IMR-90 (cell line): ENCODE measurements at regions of chr13 and their contacts with region 1.

Region 1: DNA sequence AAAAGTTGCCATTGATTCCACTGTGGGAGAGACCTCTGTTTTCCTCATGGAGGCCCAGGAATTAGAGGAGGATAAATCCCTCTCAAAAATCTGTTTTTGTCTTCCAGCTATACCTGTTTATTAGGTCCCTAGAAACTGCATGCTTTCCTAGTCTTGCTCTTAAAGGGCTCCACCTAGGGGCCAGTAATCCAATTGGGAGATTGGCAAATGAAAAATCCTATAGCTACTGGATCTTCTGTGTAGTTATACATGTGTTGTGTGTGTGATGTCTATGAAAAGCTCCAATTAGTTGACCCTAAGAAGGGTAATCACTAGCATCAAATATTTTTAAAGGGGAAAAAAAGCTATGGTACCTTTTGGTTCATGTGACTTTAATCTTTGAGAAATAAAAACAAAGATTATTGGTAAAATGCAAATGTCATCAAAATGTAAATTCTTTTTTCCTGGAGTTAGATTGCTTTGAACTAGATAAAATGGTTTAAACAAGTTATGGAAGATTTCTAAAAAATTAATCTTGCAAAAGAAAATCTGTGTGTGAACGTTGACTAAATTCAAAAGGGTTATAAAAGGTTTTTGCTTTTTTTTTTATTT is 63.4 kb upstream of the C1QTNF9B start:
- DNase-seq: peak; percentile 60
- ATAC-seq: peak; percentile 69
- H3K4me3 ChIP-seq: no peak overlapping the region
- H3K27ac ChIP-seq: no peak overlapping the region
- H3K4me1 ChIP-seq: peaks cover 2% of the 10 kb centered on the region; the same call in 1 of the 2 replicates
- H3K27me3 ChIP-seq: no peaks in the 10 kb centered on the region
- CTCF ChIP-seq: peak; percentile 72
- POLR2A ChIP-seq: no peak
- RAD21 ChIP-seq: peak; percentile 62

Region 2: GRCh38 chr13:23921451-23921888 is 39.2 kb before region 1 on chr13:
- CTCF ChIA-PET with region 1: interaction called, 7 read pairs
- POLR2A ChIA-PET with region 1: no interaction called
- dilution Hi-C with region 1: no loop called
- in situ Hi-C with region 1: no loop called
- intact Hi-C with region 1: loop called (anchors 2 kb)
- DNase-seq: peak; percentile 66
- ATAC-seq: peak; percentile 61
- H3K4me3 ChIP-seq: no peak overlapping the region
- H3K27ac ChIP-seq: no peak overlapping the region
- H3K4me1 ChIP-seq: peaks cover 2% of the 10 kb centered on the region; the same call in 1 of the 2 replicates
- H3K27me3 ChIP-seq: no peaks in the 10 kb centered on the region
- CTCF ChIP-seq: peak; percentile 83
- POLR2A ChIP-seq: no peak
- RAD21 ChIP-seq: peak; percentile 86

Region 3: DNA sequence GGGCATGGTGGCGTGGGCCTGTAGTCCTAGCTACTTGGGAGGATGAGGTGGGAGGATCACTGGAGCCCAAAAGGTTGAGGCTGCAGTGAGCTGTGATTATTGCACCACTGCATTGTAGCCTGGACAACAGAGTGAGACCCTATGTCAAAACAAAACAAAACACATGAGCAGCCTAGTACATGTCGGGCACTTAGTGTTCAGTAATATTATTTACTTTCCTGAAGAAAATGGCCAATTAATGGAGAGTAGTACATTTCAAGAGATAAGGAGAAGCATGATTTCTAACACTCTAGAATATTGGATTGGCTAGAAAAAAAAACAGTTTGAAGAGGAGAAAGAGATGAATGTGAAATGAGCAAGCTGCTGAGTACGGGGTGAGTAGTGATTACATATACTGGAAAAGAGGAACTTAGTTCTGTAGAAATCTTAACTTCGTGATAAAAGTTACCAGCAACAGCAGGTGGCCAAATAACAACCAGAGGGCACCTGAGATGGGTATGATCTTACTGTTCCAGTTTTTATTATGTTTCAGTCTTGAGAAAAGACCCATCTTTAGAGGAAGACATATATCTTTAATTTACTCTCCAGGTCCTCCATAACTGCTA is 236.0 kb after region 1 on chr13:
- CTCF ChIA-PET with region 1: no interaction called
- POLR2A ChIA-PET with region 1: no interaction called
- dilution Hi-C with region 1: no loop called
- in situ Hi-C with region 1: no loop called
- intact Hi-C with region 1: no loop called
- DNase-seq: no peak
- ATAC-seq: no peak
- H3K4me3 ChIP-seq: no peak overlapping the region
- H3K27ac ChIP-seq: no peak overlapping the region
- H3K4me1 ChIP-seq: no peaks in the 10 kb centered on the region; the same call in 1 of the 2 replicates
- H3K27me3 ChIP-seq: no peaks in the 10 kb centered on the region
- CTCF ChIP-seq: no peak
- POLR2A ChIP-seq: no peak
- RAD21 ChIP-seq: no peak